Activated B cell treated with CpG ODN at 0.5 μM for 24 hours (primary cell): ENCODE measurements at regions of chr17 and their contacts with region 1.

Region 1: GRCh38 chr17:27892866-27893769 is at the start of gene LYRM9:
- DNase-seq: peak; percentile 97
- ATAC-seq: peak; percentile 96
- H3K4me3 Mint-ChIP-seq: peak within 1 kb of the TSS; percentile 84
- H3K27ac Mint-ChIP-seq: peak within 1 kb of the TSS; percentile 69
- H3K4me1 Mint-ChIP-seq: peaks cover 17% of the 10 kb centered on the region
- H3K27me3 Mint-ChIP-seq: no peaks in the 10 kb centered on the region
- CTCF ChIP-seq: peak; percentile 91
- total RNA-seq, gene LYRM9: 7.2 and 7.5 TPM in 2 replicates

Region 2: DNA sequence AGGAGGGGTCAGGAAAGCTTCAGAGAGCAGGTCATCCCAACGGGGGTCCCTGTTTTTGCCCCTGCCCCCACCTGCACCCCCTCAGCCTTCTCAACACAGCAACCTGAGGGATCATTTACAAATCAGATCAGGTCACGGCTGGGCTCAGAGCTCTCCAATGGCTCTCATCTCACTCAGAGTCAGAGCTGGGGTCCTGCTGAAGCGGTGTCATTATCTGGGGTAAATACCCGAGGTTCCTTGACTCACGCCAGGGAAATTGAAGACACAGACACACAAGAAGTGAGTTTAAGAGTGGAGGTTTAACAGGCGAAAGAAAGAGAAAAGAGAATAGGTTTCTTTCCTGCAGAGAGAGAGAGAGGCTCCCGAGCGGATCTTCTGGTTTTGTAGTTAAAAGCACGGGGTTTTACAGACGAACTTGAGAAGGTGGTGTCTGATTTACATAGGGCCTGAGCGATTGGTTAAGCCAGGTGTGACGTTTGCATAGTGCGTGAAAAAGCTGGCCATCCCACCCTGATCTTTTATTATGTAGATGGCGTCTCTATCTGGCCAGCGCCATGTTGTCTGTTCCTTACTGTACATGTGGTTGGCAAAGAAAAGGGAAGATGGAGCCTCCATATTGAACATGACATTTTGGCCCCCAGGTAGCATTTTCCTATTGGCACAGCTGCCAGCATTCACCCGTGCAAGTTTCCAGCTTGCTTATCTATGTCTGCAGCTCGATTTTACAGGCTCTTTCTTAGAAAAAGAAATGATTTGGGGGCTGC is 547.8 kb before region 1 on chr17:
- CTCF ChIA-PET with region 1: no interaction called
- POLR2A ChIA-PET with region 1: no interaction called
- intact Hi-C with region 1: loop called (anchors 5 kb)
- DNase-seq: no peak
- ATAC-seq: no peak
- H3K4me3 Mint-ChIP-seq: peak overlapping the region; percentile 38
- H3K27ac Mint-ChIP-seq: peak overlapping the region; percentile 41
- H3K4me1 Mint-ChIP-seq: peaks cover 26% of the 10 kb centered on the region
- H3K27me3 Mint-ChIP-seq: no peaks in the 10 kb centered on the region
- CTCF ChIP-seq: no peak

Region 3: DNA sequence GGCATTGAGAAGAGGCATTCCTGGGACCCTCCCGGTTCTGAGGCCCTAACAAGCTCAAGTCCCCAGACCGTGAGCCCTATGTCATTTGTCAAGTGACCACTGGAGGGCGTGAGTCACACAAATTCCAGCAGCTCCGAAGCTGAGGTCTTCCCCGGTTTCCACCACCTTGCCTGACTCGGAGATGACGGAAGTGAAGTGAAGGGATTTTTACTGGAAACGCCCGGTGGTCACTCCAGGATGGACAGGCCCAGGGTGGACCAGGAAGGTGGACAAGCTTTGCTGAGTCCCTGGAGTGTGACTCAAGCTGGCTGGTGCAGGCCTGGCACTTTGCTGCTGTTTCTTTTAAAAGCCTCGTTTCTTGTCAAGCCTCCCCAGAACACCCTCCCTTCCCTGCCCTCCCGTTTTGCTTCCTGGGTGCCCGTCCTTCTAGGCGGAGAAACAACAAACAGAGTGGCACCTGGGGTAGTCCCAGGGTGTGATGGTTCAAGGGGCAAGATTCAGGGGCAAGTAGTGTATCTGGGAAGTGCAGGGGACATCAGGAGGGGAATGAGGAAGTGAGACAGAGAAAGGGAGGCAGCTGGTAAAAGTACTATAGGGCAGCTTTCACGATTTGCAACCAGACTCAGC is 87.5 kb before region 1 on chr17:
- CTCF ChIA-PET with region 1: interaction called, 93 read pairs
- POLR2A ChIA-PET with region 1: interaction called, 26 read pairs
- intact Hi-C with region 1: loop called (anchors 1 kb)
- DNase-seq: peak; percentile 61
- ATAC-seq: peak; percentile 64
- H3K4me3 Mint-ChIP-seq: peak overlapping the region; percentile 83
- H3K27ac Mint-ChIP-seq: peak overlapping the region; percentile 96
- H3K4me1 Mint-ChIP-seq: peaks cover 50% of the 10 kb centered on the region
- H3K27me3 Mint-ChIP-seq: no peaks in the 10 kb centered on the region
- CTCF ChIP-seq: no peak

Region 4: DNA sequence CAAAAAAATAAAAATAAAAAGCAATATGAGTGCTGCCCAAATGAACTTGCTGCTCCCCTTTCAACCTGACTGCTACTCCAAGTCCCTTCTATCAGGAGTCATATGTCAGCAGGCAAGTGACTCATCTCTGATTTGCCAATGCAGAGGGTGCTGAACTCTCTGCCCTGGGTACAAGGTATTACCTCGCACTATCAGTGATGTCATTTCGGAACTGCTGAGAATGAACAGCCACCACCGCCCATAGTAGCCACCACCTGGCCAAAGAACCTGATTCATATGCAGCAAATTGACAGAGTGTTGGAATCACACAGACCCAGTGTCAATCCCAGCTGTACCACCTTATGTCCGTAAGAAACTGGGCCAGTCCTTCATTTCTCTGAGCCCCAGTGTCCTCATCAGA is 31.1 kb before region 1 on chr17:
- CTCF ChIA-PET with region 1: no interaction called
- POLR2A ChIA-PET with region 1: no interaction called
- intact Hi-C with region 1: no loop called
- DNase-seq: no peak
- ATAC-seq: no peak
- H3K4me3 Mint-ChIP-seq: no peak overlapping the region
- H3K27ac Mint-ChIP-seq: no peak overlapping the region
- H3K4me1 Mint-ChIP-seq: no peaks in the 10 kb centered on the region
- H3K27me3 Mint-ChIP-seq: peaks cover 6% of the 10 kb centered on the region
- CTCF ChIP-seq: no peak

Region 5: GRCh38 chr17:27879987-27880608 is 13.0 kb before region 1 on chr17:
- CTCF ChIA-PET with region 1: interaction called, 14 read pairs
- POLR2A ChIA-PET with region 1: interaction called, 5 read pairs
- intact Hi-C with region 1: no loop called
- DNase-seq: peak; percentile 46
- ATAC-seq: peak; percentile 85
- H3K4me3 Mint-ChIP-seq: no peak overlapping the region
- H3K27ac Mint-ChIP-seq: no peak overlapping the region
- H3K4me1 Mint-ChIP-seq: no peaks in the 10 kb centered on the region
- H3K27me3 Mint-ChIP-seq: no peaks in the 10 kb centered on the region
- CTCF ChIP-seq: peak; percentile 38

Region 6: DNA sequence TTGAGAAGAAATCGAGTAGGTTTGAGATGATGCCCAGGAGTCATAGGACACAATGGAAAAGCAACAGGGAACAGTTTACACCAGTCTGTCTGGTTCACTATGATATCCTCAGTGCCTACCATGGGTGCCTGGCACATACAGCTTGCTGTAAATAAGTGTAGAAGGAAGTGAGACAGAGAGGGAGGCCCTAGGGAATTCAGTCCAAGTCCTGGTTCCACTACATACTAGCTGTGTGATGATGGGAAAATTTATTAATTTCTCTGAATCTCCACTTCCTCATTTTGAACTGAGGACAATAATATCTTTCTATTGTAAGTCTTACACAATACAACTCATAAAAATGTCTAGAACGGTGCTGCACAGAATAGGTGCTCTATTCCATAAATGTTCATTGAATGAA is 53.4 kb after region 1 on chr17:
- CTCF ChIA-PET with region 1: interaction called, 4 read pairs
- POLR2A ChIA-PET with region 1: no interaction called
- intact Hi-C with region 1: loop called (anchors 1 kb)
- DNase-seq: no peak
- ATAC-seq: peak; percentile 97
- H3K4me3 Mint-ChIP-seq: no peak overlapping the region
- H3K27ac Mint-ChIP-seq: no peak overlapping the region
- H3K4me1 Mint-ChIP-seq: peaks cover 28% of the 10 kb centered on the region
- H3K27me3 Mint-ChIP-seq: no peaks in the 10 kb centered on the region
- CTCF ChIP-seq: no peak

Region 7: GRCh38 chr17:28252436-28252835 is 359.3 kb after region 1 on chr17:
- CTCF ChIA-PET with region 1: interaction called, 6 read pairs
- POLR2A ChIA-PET with region 1: interaction called, 4 read pairs
- intact Hi-C with region 1: loop called (anchors 2 kb)
- DNase-seq: no peak
- ATAC-seq: no peak
- H3K4me3 Mint-ChIP-seq: no peak overlapping the region
- H3K27ac Mint-ChIP-seq: no peak overlapping the region
- H3K4me1 Mint-ChIP-seq: peaks cover 6% of the 10 kb centered on the region
- H3K27me3 Mint-ChIP-seq: peaks cover 17% of the 10 kb centered on the region
- CTCF ChIP-seq: no peak